Activated CD8-positive, alpha-beta T cell treated with anti-CD3 and anti-CD28 coated beads, Interleukin-2, amount 10 ng/mL, durations not matched to agents 7 days and 5 days (primary cell): ENCODE measurements at regions of chr2 and their contacts with region 1.

Region 1: DNA sequence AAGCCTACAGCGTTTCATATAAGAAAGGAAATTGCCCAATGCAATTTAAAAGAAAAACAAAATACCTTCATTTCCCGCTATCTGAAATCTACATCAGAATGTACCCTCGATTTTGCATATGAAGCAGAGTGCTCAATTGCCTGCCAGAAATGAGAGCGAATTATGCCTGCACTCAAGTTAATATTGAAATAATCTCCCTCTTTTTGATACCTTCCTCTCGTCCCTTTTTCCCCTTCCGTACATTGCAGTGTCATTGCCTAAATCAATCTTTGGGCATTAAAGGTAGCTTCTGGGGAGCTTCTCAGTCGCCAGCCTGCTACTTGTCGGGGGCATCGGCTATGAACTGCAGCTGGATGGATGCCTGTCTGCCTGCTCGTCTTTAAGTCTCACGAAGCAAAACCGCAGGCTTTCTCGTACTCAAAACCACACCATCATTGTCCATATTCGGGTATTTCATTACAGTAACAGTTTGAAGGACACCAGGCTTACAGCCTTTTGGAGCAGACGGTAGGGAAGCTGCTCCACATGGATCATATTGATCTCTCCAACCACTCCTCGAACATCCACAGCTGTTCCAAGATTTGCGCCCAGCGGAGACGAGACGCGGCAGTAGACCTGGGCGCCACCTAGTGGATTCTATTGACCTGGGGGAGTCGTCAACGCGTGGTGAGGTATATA is 64.0 kb upstream of the HNRNPA3 start:
- DNase-seq: peak; percentile 83
- ATAC-seq: peak; percentile 96
- H3K4me3 Mint-ChIP-seq: peak overlapping the region; percentile 76
- H3K27ac Mint-ChIP-seq: peak overlapping the region; percentile 53
- H3K4me1 Mint-ChIP-seq: peaks cover 13% of the 10 kb centered on the region
- H3K27me3 Mint-ChIP-seq: peaks cover 42% of the 10 kb centered on the region

Region 2: DNA sequence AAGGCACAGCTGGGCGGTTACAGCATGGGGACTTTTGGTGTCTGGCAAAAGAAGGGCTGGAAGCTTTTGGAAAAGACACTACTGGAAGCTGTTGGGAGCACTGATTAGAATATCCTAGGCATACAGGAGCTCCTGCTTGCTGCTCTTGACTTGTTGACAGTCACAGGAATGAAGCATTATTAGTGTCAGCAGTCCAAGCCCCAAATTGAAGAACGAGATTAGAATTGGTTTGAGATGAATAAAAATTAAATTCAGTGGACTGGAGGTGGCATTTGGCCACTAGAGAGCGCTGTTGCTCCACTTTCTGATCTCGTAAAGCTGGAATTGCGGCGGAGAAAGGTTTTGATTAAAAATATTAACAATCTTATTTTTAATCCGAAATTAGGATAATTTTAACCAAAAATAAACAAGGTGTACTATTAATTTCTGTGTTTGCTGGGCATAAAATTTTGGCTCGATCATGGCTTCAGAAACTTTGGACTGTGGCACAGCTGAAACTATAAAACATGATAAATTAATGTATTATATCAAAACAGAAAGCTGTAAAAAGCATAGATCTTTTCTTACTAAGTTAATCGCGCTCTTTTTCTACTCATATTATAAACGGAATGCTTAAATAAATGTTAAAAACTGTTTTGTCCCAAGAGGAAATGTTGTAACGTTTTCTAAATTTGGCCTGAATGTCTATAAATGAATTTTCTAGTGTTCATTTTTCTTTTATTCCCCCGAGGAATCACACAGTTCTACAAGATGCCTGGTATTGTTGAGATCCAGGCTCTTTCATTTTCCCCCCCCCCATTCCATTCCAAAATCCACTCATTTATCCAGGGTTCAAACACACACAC is 1021.5 kb before region 1 on chr2:
- CTCF ChIA-PET with region 1: interaction called, 25 read pairs
- POLR2A ChIA-PET with region 1: no interaction called
- DNase-seq: peak; percentile 75
- ATAC-seq: no peak
- H3K4me3 Mint-ChIP-seq: no peak overlapping the region
- H3K27ac Mint-ChIP-seq: no peak overlapping the region
- H3K4me1 Mint-ChIP-seq: peaks cover 16% of the 10 kb centered on the region
- H3K27me3 Mint-ChIP-seq: peaks cover 73% of the 10 kb centered on the region

Region 3: GRCh38 chr2:176554101-176555048 is 594.2 kb before region 1 on chr2:
- CTCF ChIA-PET with region 1: interaction called, 12 read pairs
- POLR2A ChIA-PET with region 1: no interaction called
- DNase-seq: peak; percentile 47
- ATAC-seq: peak; percentile 62
- H3K4me3 Mint-ChIP-seq: peak overlapping the region; percentile 63
- H3K27ac Mint-ChIP-seq: no peak overlapping the region
- H3K4me1 Mint-ChIP-seq: peaks cover 12% of the 10 kb centered on the region
- H3K27me3 Mint-ChIP-seq: peaks cover 43% of the 10 kb centered on the region

Region 4: GRCh38 chr2:176653479-176654443 is 494.9 kb before region 1 on chr2:
- CTCF ChIA-PET with region 1: interaction called, 71 read pairs
- POLR2A ChIA-PET with region 1: no interaction called
- DNase-seq: peak; percentile 59
- ATAC-seq: peak; percentile 64
- H3K4me3 Mint-ChIP-seq: no peak overlapping the region
- H3K27ac Mint-ChIP-seq: no peak overlapping the region
- H3K4me1 Mint-ChIP-seq: peaks cover 24% of the 10 kb centered on the region
- H3K27me3 Mint-ChIP-seq: peaks cover 39% of the 10 kb centered on the region

Region 5: DNA sequence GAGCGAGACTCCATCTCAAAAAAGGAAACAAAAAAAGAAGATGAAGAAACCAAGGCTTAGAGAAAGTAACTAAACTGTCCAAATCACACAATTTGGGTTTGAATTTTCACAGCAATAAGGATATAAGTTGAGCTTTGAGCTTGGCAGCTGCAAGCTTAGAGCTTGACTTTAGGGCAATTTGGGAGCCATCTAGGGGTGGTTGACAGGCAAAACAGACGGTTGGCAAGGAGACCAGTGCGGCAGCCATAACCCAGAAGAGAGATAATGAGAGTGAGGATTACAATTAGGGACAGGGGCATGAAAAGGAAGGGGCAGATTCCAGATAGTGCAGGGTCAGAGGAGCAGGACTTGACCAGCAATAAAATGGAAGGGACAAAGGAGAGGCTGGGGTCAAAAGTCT is 318.3 kb before region 1 on chr2:
- CTCF ChIA-PET with region 1: interaction called, 15 read pairs
- POLR2A ChIA-PET with region 1: no interaction called
- DNase-seq: peak; percentile 58
- ATAC-seq: peak; percentile 44
- H3K4me3 Mint-ChIP-seq: no peak overlapping the region
- H3K27ac Mint-ChIP-seq: peak overlapping the region; percentile 7
- H3K4me1 Mint-ChIP-seq: peaks cover 45% of the 10 kb centered on the region
- H3K27me3 Mint-ChIP-seq: no peaks in the 10 kb centered on the region

Region 6: GRCh38 chr2:176997074-176997791 is 151.4 kb before region 1 on chr2:
- CTCF ChIA-PET with region 1: no interaction called
- POLR2A ChIA-PET with region 1: no interaction called
- DNase-seq: peak; percentile 24
- ATAC-seq: peak; percentile 58
- H3K4me3 Mint-ChIP-seq: peak overlapping the region; percentile 3
- H3K27ac Mint-ChIP-seq: peak overlapping the region; percentile 68
- H3K4me1 Mint-ChIP-seq: peaks cover 20% of the 10 kb centered on the region
- H3K27me3 Mint-ChIP-seq: no peaks in the 10 kb centered on the region

Region 7: GRCh38 chr2:177078416-177078815 is 70.2 kb before region 1 on chr2:
- CTCF ChIA-PET with region 1: interaction called, 13 read pairs
- POLR2A ChIA-PET with region 1: no interaction called
- DNase-seq: no peak
- ATAC-seq: no peak
- H3K4me3 Mint-ChIP-seq: no peak overlapping the region
- H3K27ac Mint-ChIP-seq: no peak overlapping the region
- H3K4me1 Mint-ChIP-seq: no peaks in the 10 kb centered on the region
- H3K27me3 Mint-ChIP-seq: peaks cover 7% of the 10 kb centered on the region

Region 8: DNA sequence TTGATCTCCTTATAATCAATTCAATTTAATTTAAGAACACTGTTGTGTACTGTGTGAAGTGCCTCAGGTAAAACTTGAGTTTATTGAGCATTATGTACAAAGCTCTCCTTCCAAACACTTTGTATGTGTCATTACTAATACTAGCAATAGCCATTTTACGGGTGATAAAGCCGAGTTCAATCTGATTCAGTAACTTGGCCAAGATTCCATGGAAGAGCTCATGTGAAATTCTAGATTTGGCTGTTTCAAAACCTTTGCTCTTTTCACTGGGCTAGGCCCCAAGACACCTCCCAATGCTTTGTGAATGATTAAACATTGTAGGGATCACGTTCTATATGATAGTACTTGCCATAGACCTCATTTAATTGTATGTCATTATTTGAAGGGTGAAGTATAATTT is 124.8 kb after region 1 on chr2:
- CTCF ChIA-PET with region 1: no interaction called
- POLR2A ChIA-PET with region 1: no interaction called
- DNase-seq: no peak
- ATAC-seq: no peak
- H3K4me3 Mint-ChIP-seq: no peak overlapping the region
- H3K27ac Mint-ChIP-seq: no peak overlapping the region
- H3K4me1 Mint-ChIP-seq: peaks cover 37% of the 10 kb centered on the region
- H3K27me3 Mint-ChIP-seq: no peaks in the 10 kb centered on the region